ENCODE measurements at regions of chr5 and their contacts with region 1.

Region 1: GRCh38 chr5:97452646-97453045 is 269.6 kb upstream of the RIOK2 start:
- DNase-seq: no peak
- ATAC-seq: peak in 2 of 8 donors; percentile 56 to 85
- H3K4me3 ChIP-seq: no peak overlapping the region
- H3K27ac ChIP-seq: no peak overlapping the region
- H3K4me1 ChIP-seq: no peaks in the 10 kb centered on the region
- H3K27me3 ChIP-seq: no peaks in the 10 kb centered on the region
- CTCF ChIP-seq: no peak

Region 2: GRCh38 chr5:97338729-97339128 is 113.9 kb before region 1 on chr5:
- intact Hi-C with region 1: no loop called
- DNase-seq: no peak
- ATAC-seq: no peak
- H3K4me3 ChIP-seq: no peak overlapping the region
- H3K27ac ChIP-seq: no peak overlapping the region
- H3K4me1 ChIP-seq: no peaks in the 10 kb centered on the region
- H3K27me3 ChIP-seq: no peaks in the 10 kb centered on the region
- CTCF ChIP-seq: no peak

Region 3: GRCh38 chr5:97471951-97472350 is 19.3 kb after region 1 on chr5:
- intact Hi-C with region 1: loop called in 1 of 10 experiments (anchors 2 kb)
- DNase-seq: no peak
- ATAC-seq: no peak
- H3K4me3 ChIP-seq: no peak overlapping the region
- H3K27ac ChIP-seq: no peak overlapping the region
- H3K4me1 ChIP-seq: no peaks in the 10 kb centered on the region
- H3K27me3 ChIP-seq: no peaks in the 10 kb centered on the region
- CTCF ChIP-seq: no peak